Activated CD4-positive, alpha-beta memory T cell treated with anti-CD3 and anti-CD28 coated beads, Interleukin-2, amount 10 ng/mL, durations not matched to agents 7 days and 5 days (primary cell): ENCODE measurements at regions of chr1 and their contacts with region 1.

Region 1: DNA sequence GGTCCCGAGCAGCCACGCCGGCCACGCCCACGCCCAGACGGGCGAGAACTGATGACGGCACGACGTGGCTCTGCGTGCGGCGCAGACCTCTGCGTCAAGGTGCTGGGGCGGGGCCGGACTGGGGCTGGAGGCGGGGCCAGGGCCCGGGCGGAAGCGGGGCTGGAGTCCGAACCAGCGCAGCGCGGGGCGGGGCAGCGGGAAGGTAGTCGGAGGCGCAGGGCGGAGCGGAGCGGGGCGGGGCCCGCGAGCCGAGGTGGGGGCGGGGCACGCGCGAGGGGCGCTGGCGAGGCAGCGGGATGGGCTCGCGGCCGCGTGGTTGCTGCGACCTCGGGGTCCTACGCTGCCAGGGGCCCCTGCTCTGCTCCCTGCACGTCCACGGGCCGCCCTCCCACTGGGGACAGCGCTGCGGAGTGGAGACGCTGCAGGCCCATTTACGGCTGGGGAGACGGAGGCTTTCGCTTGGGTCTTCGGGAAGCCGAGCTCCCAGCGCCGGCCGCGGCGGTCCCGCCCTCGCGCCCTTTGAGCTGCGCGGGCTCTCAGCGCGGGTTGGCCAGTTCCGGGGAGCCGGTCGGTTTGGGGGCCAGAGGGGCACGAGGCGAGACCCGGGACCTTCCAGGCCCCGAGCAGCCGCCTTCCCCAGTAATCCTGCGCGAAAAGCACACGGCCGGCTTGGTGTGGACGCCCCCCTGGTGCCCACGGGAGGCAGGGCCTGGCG is at the start of gene PEX10:
- DNase-seq: peak; percentile 99
- H3K4me3 Mint-ChIP-seq: peak within 1 kb of the TSS; percentile 85
- H3K27ac Mint-ChIP-seq: peak within 1 kb of the TSS; percentile 94
- H3K4me1 Mint-ChIP-seq: peaks cover 40% of the 10 kb centered on the region
- H3K27me3 Mint-ChIP-seq: no peaks in the 10 kb centered on the region
- total RNA-seq, gene PEX10: 6.8 to 9.5 TPM

Region 2: DNA sequence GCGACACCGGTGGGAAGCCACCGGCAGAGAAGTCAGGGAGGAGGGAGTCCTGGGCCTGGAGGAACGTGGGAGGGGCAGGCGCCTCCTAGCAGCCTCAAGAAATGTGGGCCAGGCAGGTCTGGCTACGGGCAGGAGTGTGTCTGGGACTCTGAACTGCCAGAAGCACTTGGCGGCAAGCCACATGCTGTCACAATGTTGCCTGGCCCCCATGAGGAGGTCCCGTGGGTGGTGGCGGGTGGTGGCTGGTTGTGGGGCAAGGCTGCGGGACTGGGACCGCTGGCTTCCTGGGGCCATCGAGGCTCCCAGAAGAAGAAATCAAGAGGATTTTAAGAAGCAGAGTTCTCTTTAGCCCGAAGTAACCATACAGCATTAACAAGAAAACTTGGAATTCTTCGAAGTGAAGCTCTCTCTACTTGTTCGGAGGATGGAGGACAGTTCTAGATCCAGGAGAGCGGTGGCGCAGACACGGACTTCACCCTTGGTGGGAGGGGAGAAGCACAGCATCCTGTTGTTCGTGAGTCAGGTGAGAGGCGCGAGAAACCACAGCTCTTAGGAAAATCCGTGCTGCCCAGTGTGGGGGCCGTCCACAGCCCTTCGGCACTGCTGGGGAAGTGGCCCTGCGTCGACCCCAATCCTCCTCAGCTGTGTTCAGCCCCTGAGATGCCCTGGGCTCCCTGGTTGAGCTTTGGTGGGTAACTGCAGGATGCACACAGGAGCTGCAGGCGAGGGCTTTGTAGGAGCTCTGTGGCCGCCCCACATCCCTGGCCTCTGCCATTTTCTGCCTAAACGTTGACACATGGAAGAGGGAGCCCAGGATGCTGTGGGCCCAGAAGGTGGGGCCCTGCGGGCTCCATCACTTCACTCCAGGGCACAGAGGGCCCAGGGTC is 172.2 kb before region 1 on chr1:
- CTCF ChIA-PET with region 1: no interaction called
- POLR2A ChIA-PET with region 1: no interaction called
- DNase-seq: no peak
- H3K4me3 Mint-ChIP-seq: no peak overlapping the region
- H3K27ac Mint-ChIP-seq: peak overlapping the region; percentile 50
- H3K4me1 Mint-ChIP-seq: peaks cover 72% of the 10 kb centered on the region
- H3K27me3 Mint-ChIP-seq: no peaks in the 10 kb centered on the region

Region 3: DNA sequence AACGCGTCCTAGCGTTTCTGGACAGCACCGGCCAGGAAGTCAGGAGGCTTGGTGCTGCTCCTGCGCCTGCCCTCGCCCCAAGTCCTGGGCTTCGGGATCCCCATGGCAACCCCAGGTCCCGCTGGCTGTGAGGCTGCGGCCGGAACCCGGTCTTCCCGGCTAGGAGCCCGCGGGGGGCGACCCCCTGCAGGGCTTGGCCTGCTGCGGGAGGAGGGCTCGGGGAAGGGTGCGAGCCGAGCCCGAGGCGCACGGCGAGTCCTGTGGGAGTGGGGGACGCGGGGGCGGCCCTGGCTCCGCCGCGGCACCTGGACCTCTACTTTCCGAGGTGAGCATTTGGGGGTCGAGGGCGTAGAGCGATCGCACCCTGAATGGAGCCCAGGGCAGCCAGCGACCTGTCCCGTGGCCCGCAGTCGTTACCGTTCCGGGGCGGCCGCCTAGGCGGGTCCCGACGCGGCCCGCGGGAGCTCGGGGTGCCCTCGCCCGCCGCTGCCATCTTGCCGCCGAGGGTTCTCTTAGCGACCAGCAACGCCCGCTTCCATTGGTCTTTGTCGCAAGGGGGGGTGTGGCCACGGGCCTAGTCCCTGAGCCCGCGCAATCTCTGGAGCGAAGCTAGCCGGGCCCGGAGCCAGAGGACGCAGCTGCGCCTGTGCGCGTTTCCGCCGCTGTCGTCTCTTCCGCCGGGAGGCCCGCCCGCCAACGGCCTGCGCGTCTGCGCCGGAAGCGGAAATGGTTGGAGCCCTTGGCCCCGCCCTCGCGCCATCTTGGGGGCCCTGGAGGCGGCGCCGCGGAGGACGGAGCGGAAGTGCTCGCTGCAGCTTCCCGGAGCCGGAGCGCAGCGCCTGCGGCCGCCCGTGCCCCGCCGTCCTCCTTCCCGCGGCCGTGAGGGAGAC is 21.4 kb before region 1 on chr1 and contains the starts of genes MORN1 and RER1:
- CTCF ChIA-PET with region 1: interaction called, 8 read pairs
- POLR2A ChIA-PET with region 1: interaction called, 18 read pairs
- DNase-seq: peak; percentile 99
- H3K4me3 Mint-ChIP-seq: peak within 1 kb of the TSS; percentile 85
- H3K27ac Mint-ChIP-seq: peak within 1 kb of the TSS; percentile 79
- H3K4me1 Mint-ChIP-seq: peaks cover 45% of the 10 kb centered on the region
- H3K27me3 Mint-ChIP-seq: no peaks in the 10 kb centered on the region
- total RNA-seq, gene MORN1: 6.2 to 6.3 TPM
- total RNA-seq, gene RER1: 151 to 160 TPM

Region 4: GRCh38 chr1:2525920-2526823 is 113.5 kb after region 1 on chr1 and contains the start of gene PANK4:
- CTCF ChIA-PET with region 1: interaction called, 14 read pairs
- POLR2A ChIA-PET with region 1: interaction called, 13 read pairs
- DNase-seq: peak; percentile 93
- H3K4me3 Mint-ChIP-seq: peak within 1 kb of the TSS; percentile 80
- H3K27ac Mint-ChIP-seq: peak within 1 kb of the TSS; percentile 93
- H3K4me1 Mint-ChIP-seq: peaks cover 51% of the 10 kb centered on the region
- H3K27me3 Mint-ChIP-seq: peaks cover 21% of the 10 kb centered on the region
- total RNA-seq, gene PANK4: 71.7 to 72.6 TPM

Region 5: GRCh38 chr1:2556277-2556677 is 143.6 kb after region 1 on chr1 and contains the start of gene TNFRSF14:
- CTCF ChIA-PET with region 1: interaction called, 7 read pairs
- POLR2A ChIA-PET with region 1: interaction called, 21 read pairs
- DNase-seq: peak; percentile 85
- H3K4me3 Mint-ChIP-seq: peak within 1 kb of the TSS; percentile 95
- H3K27ac Mint-ChIP-seq: peak within 1 kb of the TSS; percentile 95
- H3K4me1 Mint-ChIP-seq: peaks cover 44% of the 10 kb centered on the region
- H3K27me3 Mint-ChIP-seq: no peaks in the 10 kb centered on the region
- total RNA-seq, gene TNFRSF14: 171 to 173 TPM

Region 6: GRCh38 chr1:2575801-2576663 is 163.4 kb after region 1 on chr1:
- CTCF ChIA-PET with region 1: interaction called, 3 read pairs
- POLR2A ChIA-PET with region 1: interaction called, 13 read pairs
- DNase-seq: no peak
- H3K4me3 Mint-ChIP-seq: no peak overlapping the region
- H3K27ac Mint-ChIP-seq: peak overlapping the region; percentile 92
- H3K4me1 Mint-ChIP-seq: peaks cover 58% of the 10 kb centered on the region
- H3K27me3 Mint-ChIP-seq: peaks cover 3% of the 10 kb centered on the region